ENCODE measurements at regions of chr11 and their contacts with region 1.

Region 1: DNA sequence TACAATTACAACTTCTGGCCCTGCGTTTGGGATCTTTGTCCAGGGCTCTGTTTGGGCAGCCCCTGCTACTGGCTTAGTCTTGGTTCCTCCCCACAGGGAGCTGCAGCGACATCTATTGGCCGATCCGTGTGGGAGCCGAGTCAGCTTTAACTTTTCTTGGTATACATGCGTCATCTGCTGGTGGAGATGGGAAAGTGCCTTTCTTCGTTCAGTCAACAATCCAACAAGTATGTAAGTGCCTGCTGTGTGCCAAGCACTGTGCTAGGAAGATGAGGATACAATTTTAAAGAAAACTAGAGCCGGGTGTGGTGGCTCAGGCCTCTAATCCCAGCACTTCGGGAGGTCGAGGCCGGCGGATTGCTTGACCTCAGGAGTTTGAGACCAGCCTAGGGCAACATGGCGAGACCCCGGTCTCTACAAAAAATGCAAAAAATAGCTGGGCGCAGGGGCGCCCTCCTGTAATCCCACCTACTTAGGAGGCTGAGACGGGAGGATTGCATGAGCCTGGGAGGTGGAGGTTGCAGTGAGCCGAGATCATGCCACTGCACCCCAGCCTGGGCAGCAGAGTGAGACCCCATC is 8.2 kb downstream of the TPBGL start:
- DNase-seq: peak; percentile 92
- ATAC-seq: peak; percentile 91
- H3K4me3 Mint-ChIP-seq: no peak overlapping the region
- H3K27ac Mint-ChIP-seq: no peak overlapping the region
- H3K4me1 Mint-ChIP-seq: no peaks in the 10 kb centered on the region
- H3K27me3 Mint-ChIP-seq: peaks cover 51% of the 10 kb centered on the region

Region 2: DNA sequence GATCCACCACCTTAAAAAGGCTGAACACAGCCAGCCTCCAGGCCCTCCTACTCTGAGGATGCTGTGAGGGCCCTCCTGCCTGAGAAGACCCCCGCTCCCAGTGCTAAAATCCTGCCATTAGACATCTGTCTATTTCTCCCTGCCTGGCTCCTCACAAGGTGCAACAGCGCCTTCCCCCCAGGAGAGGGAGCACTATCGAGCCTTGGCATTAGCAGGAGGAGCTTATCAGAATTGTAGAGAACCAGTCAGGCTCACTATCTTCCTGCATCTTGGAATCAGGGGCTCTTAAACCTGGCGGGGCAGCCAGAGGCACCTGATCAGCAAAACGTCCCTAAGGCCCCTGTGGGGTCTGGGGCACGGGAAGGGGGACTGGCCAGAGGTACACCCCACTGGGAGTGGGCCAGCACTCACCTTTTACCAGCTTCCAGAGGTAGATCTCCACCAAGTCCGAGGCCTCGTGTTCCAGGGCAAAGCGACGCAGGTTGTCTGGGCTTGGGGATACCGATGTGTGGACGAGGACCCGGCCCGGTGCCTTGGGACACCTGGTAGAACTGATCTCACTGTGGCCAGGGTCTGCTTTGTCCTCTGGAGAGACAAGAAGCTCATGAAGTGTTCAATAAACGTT is 546.3 kb before region 1 on chr11:
- CTCF ChIA-PET with region 1: interaction called, 12 read pairs
- DNase-seq: peak; percentile 68
- ATAC-seq: peak; percentile 80
- H3K4me3 Mint-ChIP-seq: no peak overlapping the region
- H3K27ac Mint-ChIP-seq: no peak overlapping the region
- H3K4me1 Mint-ChIP-seq: no peaks in the 10 kb centered on the region
- H3K27me3 Mint-ChIP-seq: peaks cover 4% of the 10 kb centered on the region

Region 3: GRCh38 chr11:75022759-75023396 is 225.9 kb before region 1 on chr11:
- CTCF ChIA-PET with region 1: interaction called, 59 read pairs
- DNase-seq: peak; percentile 81
- ATAC-seq: peak; percentile 94
- H3K4me3 Mint-ChIP-seq: no peak overlapping the region
- H3K27ac Mint-ChIP-seq: no peak overlapping the region
- H3K4me1 Mint-ChIP-seq: no peaks in the 10 kb centered on the region
- H3K27me3 Mint-ChIP-seq: no peaks in the 10 kb centered on the region

Region 4: GRCh38 chr11:75063732-75064314 is 185.0 kb before region 1 on chr11:
- CTCF ChIA-PET with region 1: no interaction called
- DNase-seq: no peak
- ATAC-seq: no peak
- H3K4me3 Mint-ChIP-seq: no peak overlapping the region
- H3K27ac Mint-ChIP-seq: no peak overlapping the region
- H3K4me1 Mint-ChIP-seq: no peaks in the 10 kb centered on the region
- H3K27me3 Mint-ChIP-seq: peaks cover 41% of the 10 kb centered on the region

Region 5: DNA sequence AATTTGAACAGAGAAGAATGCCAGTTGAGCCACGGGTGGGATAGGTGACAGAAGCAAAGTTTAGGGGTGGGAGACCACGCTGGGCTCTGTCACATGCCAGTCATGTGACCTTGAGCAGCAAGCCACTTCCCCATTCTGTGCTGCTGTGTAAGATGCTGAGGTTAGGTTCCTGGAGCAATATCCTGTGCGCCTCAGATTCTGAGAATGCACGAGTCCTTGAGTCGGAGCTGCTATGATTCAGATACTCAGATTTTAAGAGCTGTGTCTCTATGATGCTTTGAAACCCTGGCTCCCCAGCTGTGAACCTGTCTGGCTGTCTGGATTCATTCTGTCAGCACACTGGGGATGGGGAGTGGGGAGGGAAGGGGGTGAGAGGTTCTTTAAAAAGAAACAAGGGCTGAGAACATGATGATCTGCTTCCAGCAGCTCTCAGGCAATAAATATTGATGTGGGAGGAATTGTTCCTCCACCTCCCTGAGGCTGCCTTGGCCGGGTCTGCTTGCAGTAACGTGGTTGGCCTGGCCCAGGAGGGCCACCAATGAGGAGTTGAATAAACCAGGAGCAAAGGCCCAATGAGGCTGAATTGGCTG is 73.9 kb before region 1 on chr11:
- CTCF ChIA-PET with region 1: interaction called, 19 read pairs
- DNase-seq: peak; percentile 78
- ATAC-seq: peak; percentile 93
- H3K4me3 Mint-ChIP-seq: no peak overlapping the region
- H3K27ac Mint-ChIP-seq: peak overlapping the region; percentile 40
- H3K4me1 Mint-ChIP-seq: peaks cover 17% of the 10 kb centered on the region
- H3K27me3 Mint-ChIP-seq: peaks cover 27% of the 10 kb centered on the region

Region 6: GRCh38 chr11:75214411-75214821 is 34.4 kb before region 1 on chr11:
- CTCF ChIA-PET with region 1: interaction called, 27 read pairs
- DNase-seq: peak; percentile 88
- ATAC-seq: peak; percentile 85
- H3K4me3 Mint-ChIP-seq: no peak overlapping the region
- H3K27ac Mint-ChIP-seq: no peak overlapping the region
- H3K4me1 Mint-ChIP-seq: peaks cover 3% of the 10 kb centered on the region
- H3K27me3 Mint-ChIP-seq: peaks cover 37% of the 10 kb centered on the region

Region 7: DNA sequence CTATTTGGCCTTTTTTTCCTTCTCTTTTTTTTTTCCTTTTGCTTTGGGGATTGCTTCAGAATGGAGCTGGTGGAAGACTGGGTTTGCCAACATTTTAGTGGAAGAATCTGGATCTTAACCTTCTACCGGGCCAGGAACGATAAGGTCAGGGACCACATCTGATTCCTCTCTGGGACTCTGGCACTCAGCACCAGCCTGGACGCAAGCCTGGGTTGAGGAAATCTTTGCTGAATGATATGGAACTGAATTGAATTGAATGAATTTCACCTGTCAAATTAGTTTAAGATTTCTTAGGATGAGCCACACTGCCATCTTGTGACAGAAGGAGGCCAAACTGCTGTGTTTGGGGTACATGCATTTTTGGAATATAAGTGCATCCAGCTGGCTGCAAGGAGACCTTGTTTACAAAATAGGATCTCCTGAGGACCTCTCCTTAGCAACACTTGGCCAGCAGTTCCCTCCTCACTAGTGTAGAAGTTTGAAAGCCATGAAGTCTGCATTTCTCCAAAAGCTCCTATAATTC is 22.2 kb after region 1 on chr11:
- CTCF ChIA-PET with region 1: interaction called, 32 read pairs
- DNase-seq: no peak
- ATAC-seq: no peak
- H3K4me3 Mint-ChIP-seq: no peak overlapping the region
- H3K27ac Mint-ChIP-seq: no peak overlapping the region
- H3K4me1 Mint-ChIP-seq: peaks cover 14% of the 10 kb centered on the region
- H3K27me3 Mint-ChIP-seq: no peaks in the 10 kb centered on the region

Region 8: GRCh38 chr11:75342903-75343870 is 94.4 kb after region 1 on chr11:
- CTCF ChIA-PET with region 1: no interaction called
- DNase-seq: no peak
- ATAC-seq: no peak
- H3K4me3 Mint-ChIP-seq: no peak overlapping the region
- H3K27ac Mint-ChIP-seq: peak overlapping the region; percentile 4
- H3K4me1 Mint-ChIP-seq: peaks cover 82% of the 10 kb centered on the region
- H3K27me3 Mint-ChIP-seq: no peaks in the 10 kb centered on the region